Activated B cell treated with CpG ODN at 0.5 μM for 24 hours (primary cell): ENCODE measurements at regions of chr12 and their contacts with region 1.

Region 1: DNA sequence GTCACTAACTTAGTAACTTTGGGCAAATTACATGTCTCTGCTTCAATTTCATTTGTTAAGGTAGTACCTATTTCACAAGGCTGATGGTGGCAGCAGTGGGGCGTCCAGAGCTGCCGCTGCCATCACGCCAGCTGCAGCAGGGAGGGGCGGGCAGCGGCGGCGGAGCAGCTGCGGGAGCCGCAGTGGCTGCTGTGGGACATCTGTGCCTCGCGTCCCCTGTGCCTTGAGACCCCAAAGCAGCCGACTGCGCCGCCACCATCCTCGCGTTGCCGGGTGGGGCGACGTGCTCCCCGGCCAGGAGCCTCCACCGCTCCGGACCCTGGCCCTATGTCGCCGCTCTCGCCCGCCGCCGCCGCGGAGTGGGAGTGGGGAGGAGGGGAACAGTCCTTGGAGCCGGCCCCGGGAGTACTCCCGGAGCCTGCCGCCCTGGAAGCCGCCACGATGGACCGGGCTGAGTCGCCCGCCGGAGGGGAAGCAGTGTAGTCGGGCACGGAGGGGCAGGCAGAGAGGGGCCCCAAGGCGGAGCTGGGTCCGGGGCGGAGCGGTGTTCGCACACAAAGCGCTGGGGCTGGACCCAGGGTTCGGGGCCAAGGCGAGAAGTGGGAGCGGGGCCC is 51.4 kb downstream of the A2M start:
- DNase-seq: peak; percentile 38
- ATAC-seq: peak; percentile 91
- H3K4me3 Mint-ChIP-seq: peak overlapping the region; percentile 83
- H3K27ac Mint-ChIP-seq: no peak overlapping the region
- H3K4me1 Mint-ChIP-seq: peaks cover 3% of the 10 kb centered on the region
- H3K27me3 Mint-ChIP-seq: peaks cover 3% of the 10 kb centered on the region
- CTCF ChIP-seq: no peak

Region 2: DNA sequence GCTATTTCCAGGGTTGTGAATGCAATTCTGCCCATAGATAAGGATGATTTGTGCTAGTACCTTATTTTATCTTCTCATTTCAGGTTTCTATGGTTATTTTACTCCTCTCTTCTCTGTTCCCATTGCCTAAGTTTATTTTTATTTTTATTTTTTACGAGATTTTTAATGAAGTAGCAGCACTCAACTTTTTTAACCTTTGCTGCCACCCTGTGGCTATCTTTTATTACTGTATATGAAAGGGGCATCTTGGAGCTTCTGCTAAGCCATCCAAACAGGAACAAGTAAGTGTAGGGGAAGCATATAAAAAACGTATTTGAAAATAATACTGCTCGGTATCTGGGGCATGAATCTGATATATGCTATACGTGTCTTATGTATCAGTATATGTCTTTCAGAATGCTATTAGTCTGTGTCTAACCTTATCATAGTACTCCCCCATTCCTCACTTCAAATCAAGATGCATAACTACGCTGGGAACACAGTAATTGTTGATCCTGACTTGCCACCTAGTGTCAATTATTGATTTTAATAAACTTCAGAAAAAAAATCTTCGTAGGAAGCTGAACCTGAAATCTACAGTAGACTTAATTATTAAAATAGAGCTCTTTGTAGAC is 14.7 kb before region 1 on chr12:
- CTCF ChIA-PET with region 1: interaction called, 11 read pairs
- POLR2A ChIA-PET with region 1: no interaction called
- intact Hi-C with region 1: no loop called
- DNase-seq: no peak
- ATAC-seq: peak; percentile 60
- H3K4me3 Mint-ChIP-seq: no peak overlapping the region
- H3K27ac Mint-ChIP-seq: no peak overlapping the region
- H3K4me1 Mint-ChIP-seq: no peaks in the 10 kb centered on the region
- H3K27me3 Mint-ChIP-seq: peaks cover 6% of the 10 kb centered on the region
- CTCF ChIP-seq: no peak

Region 3: GRCh38 chr12:9118158-9118557 is 53.9 kb after region 1 on chr12:
- CTCF ChIA-PET with region 1: no interaction called
- POLR2A ChIA-PET with region 1: no interaction called
- intact Hi-C with region 1: no loop called
- DNase-seq: no peak
- ATAC-seq: peak; percentile 74
- H3K4me3 Mint-ChIP-seq: no peak overlapping the region
- H3K27ac Mint-ChIP-seq: no peak overlapping the region
- H3K4me1 Mint-ChIP-seq: peaks cover 15% of the 10 kb centered on the region
- H3K27me3 Mint-ChIP-seq: peaks cover 1% of the 10 kb centered on the region
- CTCF ChIP-seq: no peak

Region 4: GRCh38 chr12:9319044-9319841 is 254.9 kb after region 1 on chr12:
- CTCF ChIA-PET with region 1: no interaction called
- POLR2A ChIA-PET with region 1: no interaction called
- intact Hi-C with region 1: loop called (anchors 10 kb)
- DNase-seq: no peak
- ATAC-seq: peak; percentile 49
- H3K4me3 Mint-ChIP-seq: peak overlapping the region; percentile 21
- H3K27ac Mint-ChIP-seq: peak overlapping the region; percentile 6
- H3K4me1 Mint-ChIP-seq: peaks cover 11% of the 10 kb centered on the region
- H3K27me3 Mint-ChIP-seq: no peaks in the 10 kb centered on the region
- CTCF ChIP-seq: no peak